Naive thymus-derived CD4-positive, alpha-beta T cell (primary cell): ENCODE measurements at regions of chr2 and their contacts with region 1.

Region 1: GRCh38 chr2:189096769-189097447 is 82.7 kb downstream of the COL5A2 start:
- DNase-seq: no peak
- ATAC-seq: no peak
- H3K4me3 ChIP-seq: no peak overlapping the region
- H3K4me3 Mint-ChIP-seq: no peak overlapping the region
- H3K27ac ChIP-seq: no peak overlapping the region
- H3K27ac Mint-ChIP-seq: no peak overlapping the region
- H3K4me1 ChIP-seq: no peaks in the 10 kb centered on the region
- H3K4me1 Mint-ChIP-seq: peaks cover 0 to 5% (median 0%) of the 10 kb centered on the region in 7 donors
- H3K27me3 ChIP-seq: no peaks in the 10 kb centered on the region
- H3K27me3 Mint-ChIP-seq: no peaks in the 10 kb centered on the region

Region 2: GRCh38 chr2:189633392-189633811 is 536.5 kb after region 1 on chr2:
- CTCF ChIA-PET with region 1: interaction called, 5 read pairs
- POLR2A ChIA-PET with region 1: no interaction called
- intact Hi-C with region 1: loop called in 1 of 2 experiments (anchors 1 kb)
- DNase-seq: peak in 5 of 9 donors; percentile 23 to 39 (median 31)
- ATAC-seq: peak; percentile 52
- H3K4me3 ChIP-seq: no peak overlapping the region
- H3K4me3 Mint-ChIP-seq: no peak overlapping the region
- H3K27ac ChIP-seq: no peak overlapping the region
- H3K27ac Mint-ChIP-seq: no peak overlapping the region
- H3K4me1 ChIP-seq: no peaks in the 10 kb centered on the region
- H3K4me1 Mint-ChIP-seq: peaks cover 0 to 12% (median 3%) of the 10 kb centered on the region in 7 donors
- H3K27me3 ChIP-seq: no peaks in the 10 kb centered on the region
- H3K27me3 Mint-ChIP-seq: peaks cover 0 to 3% (median 0%) of the 10 kb centered on the region in 5 donors